ACHN (cell line): ENCODE measurements at regions of chr3 and their contacts with region 1.

Region 1: DNA sequence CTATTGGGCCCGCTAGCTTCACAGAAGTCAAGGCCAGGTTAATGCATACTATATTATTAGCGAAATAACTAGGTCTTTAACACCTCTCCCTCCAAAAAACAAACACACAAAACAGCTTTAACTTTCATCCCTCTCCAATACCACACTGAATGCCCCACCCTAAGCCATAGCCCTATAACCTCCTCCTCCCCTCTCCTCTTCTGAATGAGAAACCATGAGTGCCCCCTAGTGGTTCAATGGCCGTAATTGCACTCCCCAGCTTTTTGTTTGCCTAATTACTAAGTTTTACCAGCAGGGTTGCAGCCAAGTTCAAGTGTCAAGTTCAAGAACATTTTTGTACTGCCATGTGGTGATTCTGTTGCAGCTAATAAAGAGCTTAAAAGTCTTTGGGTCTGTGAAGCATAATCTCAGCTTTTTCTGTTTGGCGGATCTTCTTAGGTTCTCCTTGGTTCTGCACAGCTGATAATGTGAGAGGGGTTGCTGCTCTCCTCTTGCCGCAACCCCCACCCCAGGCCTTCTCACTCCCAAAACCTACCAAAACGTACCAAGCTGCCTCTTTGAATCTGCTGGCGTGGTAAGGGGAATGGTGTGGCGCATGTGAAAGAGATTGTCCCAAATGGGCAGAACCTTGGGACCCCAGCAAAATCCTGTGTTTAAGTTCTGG is 57.9 kb downstream of the RPL22L1 start:
- DNase-seq: peak; percentile 76

Region 2: DNA sequence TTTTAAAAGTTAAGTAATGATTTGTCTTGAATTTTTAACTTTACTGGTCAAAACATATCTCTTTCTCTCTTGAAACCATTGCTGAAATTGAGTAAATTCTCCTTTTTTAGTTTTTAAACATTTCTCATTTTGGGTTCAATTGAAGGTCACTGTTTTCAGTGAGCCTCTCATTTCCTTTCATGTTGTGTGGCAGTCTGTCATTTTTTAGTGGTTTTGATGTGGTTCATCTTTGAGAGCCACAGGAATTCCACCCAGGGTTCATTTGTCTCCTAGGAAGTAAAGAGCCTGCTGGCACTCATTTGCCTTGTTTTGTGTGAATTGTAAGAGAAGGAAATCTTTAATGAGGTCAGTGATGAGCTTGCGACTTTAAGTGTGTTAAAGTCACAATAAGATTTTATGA is 383.0 kb before region 1 on chr3:
- in situ Hi-C with region 1: loop called (anchors 25 kb)
- DNase-seq: peak; percentile 51